ENCODE measurements at regions of chr4 and their contacts with region 1.

Region 1: DNA sequence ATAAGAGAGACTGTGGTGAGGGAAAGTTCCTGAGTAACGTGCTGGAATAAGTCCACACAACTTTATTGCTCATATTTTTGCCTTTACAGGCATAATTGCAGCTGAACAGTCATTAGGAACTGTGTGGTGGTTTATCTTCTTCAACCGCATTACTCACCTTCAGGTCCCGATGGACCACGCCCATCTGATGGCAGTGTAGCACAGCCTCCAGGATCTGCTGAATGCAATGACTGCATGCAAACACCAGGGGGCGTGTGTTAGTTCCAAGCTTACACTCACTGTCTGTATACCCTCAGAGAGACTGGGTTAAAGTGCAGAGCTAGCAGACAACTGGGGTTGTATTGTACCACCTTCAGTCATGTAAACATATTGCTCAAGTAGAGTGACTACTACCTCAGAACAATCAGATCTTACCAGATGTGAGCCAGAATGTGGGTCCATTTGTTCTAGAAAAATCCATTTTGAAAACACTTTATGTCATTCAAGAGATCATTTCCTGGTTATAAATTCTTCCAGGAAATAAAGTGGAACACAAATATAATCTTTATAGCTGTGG is 214.0 kb downstream of the CAMK2D start:
- DNase-seq: peak; percentile 75 to 96 (median 86)
- ATAC-seq: peak; percentile 99
- H3K4me3 ChIP-seq: no peak overlapping the region
- H3K4me3 Mint-ChIP-seq: no peak overlapping the region
- H3K27ac ChIP-seq: no peak overlapping the region
- H3K27ac Mint-ChIP-seq: peak overlapping the region; percentile 68
- H3K4me1 ChIP-seq: peaks cover 5% of the 10 kb centered on the region
- H3K4me1 Mint-ChIP-seq: peaks cover 11% of the 10 kb centered on the region
- H3K27me3 ChIP-seq: no peaks in the 10 kb centered on the region
- H3K27me3 Mint-ChIP-seq: no peaks in the 10 kb centered on the region
- CTCF ChIP-seq: peak; percentile 95

Region 2: DNA sequence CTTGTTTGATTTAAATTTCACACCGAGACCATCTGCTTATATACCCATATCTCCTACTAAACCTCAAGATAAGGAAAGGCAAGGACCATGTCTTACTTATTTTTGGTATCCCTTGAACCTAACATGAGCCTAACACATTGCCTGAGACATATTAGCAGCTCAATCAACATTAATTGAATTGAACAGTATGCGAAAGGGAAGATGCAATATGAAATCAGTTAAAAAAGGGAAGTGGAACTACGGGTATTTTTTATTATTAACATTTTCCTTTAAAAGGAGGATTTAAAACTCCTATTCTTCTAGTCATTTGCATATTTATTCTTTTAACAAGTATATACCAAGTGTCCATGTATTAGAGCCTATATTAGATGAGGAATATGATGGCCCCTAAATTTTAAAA is 16.9 kb after region 1 on chr4:
- CTCF ChIA-PET with region 1: interaction called, 20 read pairs
- POLR2A ChIA-PET with region 1: no interaction called
- intact Hi-C with region 1: no loop called
- DNase-seq: no peak
- ATAC-seq: no peak
- H3K4me3 ChIP-seq: no peak overlapping the region
- H3K4me3 Mint-ChIP-seq: peak overlapping the region; percentile 64
- H3K27ac ChIP-seq: no peak overlapping the region
- H3K27ac Mint-ChIP-seq: peak overlapping the region; percentile 50
- H3K4me1 ChIP-seq: peaks cover 9% of the 10 kb centered on the region
- H3K4me1 Mint-ChIP-seq: peaks cover 49% of the 10 kb centered on the region
- H3K27me3 ChIP-seq: no peaks in the 10 kb centered on the region
- H3K27me3 Mint-ChIP-seq: no peaks in the 10 kb centered on the region
- CTCF ChIP-seq: no peak

Region 3: DNA sequence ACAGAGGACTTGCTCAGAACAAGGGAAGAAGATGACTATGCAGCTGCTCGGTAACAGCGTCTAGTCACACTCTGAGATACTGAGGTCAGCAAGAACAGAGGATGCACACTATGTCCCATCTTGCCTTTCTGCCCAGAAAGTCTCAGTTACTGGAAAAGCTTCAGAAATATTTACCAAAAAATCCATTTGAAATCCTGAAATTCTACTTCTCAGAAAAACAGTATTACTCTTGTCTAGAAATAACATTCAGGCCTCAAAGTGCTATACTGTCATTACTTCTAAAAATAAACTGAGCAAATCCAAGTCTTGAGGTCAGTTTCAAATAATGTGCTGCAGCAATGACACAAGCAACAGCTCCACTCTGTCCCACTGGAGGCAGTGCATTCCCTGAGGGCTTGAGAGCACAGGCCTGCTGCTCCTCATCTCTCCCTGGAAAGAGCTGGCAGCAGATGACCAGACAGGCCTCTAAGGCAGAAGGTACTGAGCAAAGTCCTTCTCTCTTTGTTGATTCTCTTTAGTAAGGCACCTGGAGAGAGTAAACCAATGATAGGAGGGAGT is 137.0 kb after region 1 on chr4:
- CTCF ChIA-PET with region 1: interaction called, 6 read pairs
- POLR2A ChIA-PET with region 1: interaction called, 6 read pairs
- intact Hi-C with region 1: loop called in 1 of 2 experiments (anchors 1 kb)
- DNase-seq: peak in 2 of 14 experiments; percentile 17 to 32
- ATAC-seq: no peak
- H3K4me3 ChIP-seq: no peak overlapping the region
- H3K4me3 Mint-ChIP-seq: peak overlapping the region; percentile 23
- H3K27ac ChIP-seq: peak overlapping the region; percentile 10
- H3K27ac Mint-ChIP-seq: peak overlapping the region; percentile 87
- H3K4me1 ChIP-seq: peaks cover 14% of the 10 kb centered on the region
- H3K4me1 Mint-ChIP-seq: peaks cover 53% of the 10 kb centered on the region
- H3K27me3 ChIP-seq: no peaks in the 10 kb centered on the region
- H3K27me3 Mint-ChIP-seq: no peaks in the 10 kb centered on the region
- CTCF ChIP-seq: no peak

Region 4: GRCh38 chr4:113908829-113909228 is 361.3 kb after region 1 on chr4:
- CTCF ChIA-PET with region 1: interaction called, 4 read pairs
- POLR2A ChIA-PET with region 1: interaction called, 5 read pairs
- intact Hi-C with region 1: loop called (anchors 2 to 5 kb)
- DNase-seq: peak in 3 of 14 experiments; percentile 49 to 53 (median 51)
- ATAC-seq: peak; percentile 39
- H3K4me3 ChIP-seq: no peak overlapping the region
- H3K4me3 Mint-ChIP-seq: no peak overlapping the region
- H3K27ac ChIP-seq: no peak overlapping the region
- H3K27ac Mint-ChIP-seq: no peak overlapping the region
- H3K4me1 ChIP-seq: peaks cover 14% of the 10 kb centered on the region
- H3K4me1 Mint-ChIP-seq: peaks cover 33% of the 10 kb centered on the region
- H3K27me3 ChIP-seq: no peaks in the 10 kb centered on the region
- H3K27me3 Mint-ChIP-seq: no peaks in the 10 kb centered on the region
- CTCF ChIP-seq: peak; percentile 65

Region 5: DNA sequence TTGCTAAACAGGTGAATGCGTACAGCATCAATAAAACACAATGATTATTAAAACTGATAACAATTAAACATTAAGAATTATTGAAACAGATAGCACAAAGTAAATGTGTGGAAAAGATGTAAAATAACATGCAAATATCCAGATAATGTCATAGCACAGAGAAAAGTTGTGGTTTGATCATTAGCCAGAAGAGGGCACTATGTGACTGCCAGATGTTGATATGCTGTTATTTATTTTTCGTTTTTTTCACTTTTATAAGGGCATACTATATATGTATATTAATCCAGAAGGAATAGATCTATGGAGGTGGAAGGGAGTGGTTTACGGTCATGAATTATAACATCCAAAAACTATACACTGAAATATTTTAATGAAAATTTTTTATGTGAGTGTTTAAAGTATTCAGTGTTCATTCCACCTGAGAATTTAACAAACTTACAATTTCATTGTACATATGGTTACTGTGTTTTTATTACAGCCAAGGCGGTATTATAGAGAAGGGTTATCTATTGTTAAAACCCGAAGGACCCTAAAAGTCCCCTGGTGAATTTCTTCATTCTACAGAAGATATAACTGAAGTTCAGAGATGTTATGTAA is 839.2 kb after region 1 on chr4:
- CTCF ChIA-PET with region 1: no interaction called
- POLR2A ChIA-PET with region 1: no interaction called
- intact Hi-C with region 1: loop called in 1 of 2 experiments (anchors 5 kb)
- DNase-seq: peak in 3 of 14 experiments; percentile 30 to 36 (median 34)
- ATAC-seq: no peak
- H3K4me3 ChIP-seq: no peak overlapping the region
- H3K4me3 Mint-ChIP-seq: no peak overlapping the region
- H3K27ac ChIP-seq: no peak overlapping the region
- H3K27ac Mint-ChIP-seq: no peak overlapping the region
- H3K4me1 ChIP-seq: no peaks in the 10 kb centered on the region
- H3K4me1 Mint-ChIP-seq: no peaks in the 10 kb centered on the region
- H3K27me3 ChIP-seq: no peaks in the 10 kb centered on the region
- H3K27me3 Mint-ChIP-seq: peaks cover 30% of the 10 kb centered on the region
- CTCF ChIP-seq: peak; percentile 52

Measured in CD4-positive, alpha-beta T cell (primary cell).